Activated CD4-positive, alpha-beta T cell treated with anti-CD3 and anti-CD28 coated beads, Interleukin-2, amount 10 ng/mL, durations not matched to agents 7 days and 5 days (primary cell): ENCODE measurements at regions of chr3 and their contacts with region 1.

Region 1: DNA sequence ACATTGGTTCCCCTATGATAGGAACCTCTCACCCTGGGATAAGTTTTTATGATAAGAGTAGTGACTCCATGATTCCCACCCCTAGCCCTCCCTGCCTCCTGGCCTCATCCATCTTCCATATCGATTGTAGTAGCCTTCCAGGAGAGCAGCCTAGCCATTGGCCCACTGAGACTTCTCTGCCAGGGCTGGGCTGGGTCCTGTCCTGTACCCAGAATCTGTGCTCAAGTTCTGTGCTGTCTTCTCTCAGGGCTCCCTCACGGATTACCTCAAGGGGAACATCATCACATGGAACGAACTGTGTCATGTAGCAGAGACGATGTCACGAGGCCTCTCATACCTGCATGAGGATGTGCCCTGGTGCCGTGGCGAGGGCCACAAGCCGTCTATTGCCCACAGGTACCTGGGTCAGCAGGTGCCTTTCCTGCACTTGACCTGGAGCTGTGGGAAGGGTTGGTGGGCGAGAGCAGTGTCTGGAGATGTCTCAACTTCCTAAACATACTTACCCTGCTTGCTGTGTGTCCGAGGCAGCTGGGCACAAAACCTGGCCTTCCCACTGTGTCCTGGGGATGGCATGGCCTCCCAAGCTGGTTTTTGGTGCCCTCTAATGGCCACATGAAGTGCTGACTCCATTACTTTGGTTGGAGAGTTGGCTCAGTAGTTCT is 16.6 kb upstream of the EXOG start:
- DNase-seq: peak; percentile 63
- H3K4me3 Mint-ChIP-seq: no peak overlapping the region
- H3K27ac Mint-ChIP-seq: peak overlapping the region; percentile 68
- H3K4me1 Mint-ChIP-seq: no peaks in the 10 kb centered on the region
- H3K27me3 Mint-ChIP-seq: no peaks in the 10 kb centered on the region

Region 2: DNA sequence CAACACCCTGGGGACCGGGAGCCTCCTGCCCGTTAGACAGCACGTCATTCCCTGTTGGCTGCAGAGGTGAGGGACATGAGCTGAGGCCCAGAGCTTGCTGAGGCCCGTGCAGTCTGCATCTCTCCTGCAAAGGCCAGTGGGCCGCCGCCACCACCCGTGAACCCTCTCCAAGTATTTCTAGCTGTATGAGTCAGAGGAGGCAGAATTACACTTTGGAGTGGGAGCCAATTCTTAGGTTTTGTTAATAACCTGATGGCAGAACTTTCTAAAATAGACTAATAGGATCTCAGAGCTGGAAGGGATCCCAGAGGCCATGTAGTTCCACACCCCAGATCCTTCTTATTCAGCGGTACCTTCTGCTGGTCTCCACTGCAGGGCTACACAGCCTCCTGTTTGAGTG is 953.1 kb before region 1 on chr3:
- CTCF ChIA-PET with region 1: no interaction called
- POLR2A ChIA-PET with region 1: no interaction called
- DNase-seq: no peak
- H3K4me3 Mint-ChIP-seq: no peak overlapping the region
- H3K27ac Mint-ChIP-seq: no peak overlapping the region
- H3K4me1 Mint-ChIP-seq: no peaks in the 10 kb centered on the region
- H3K27me3 Mint-ChIP-seq: peaks cover 8% of the 10 kb centered on the region

Region 3: GRCh38 chr3:38460377-38461270 is 18.9 kb before region 1 on chr3:
- CTCF ChIA-PET with region 1: no interaction called
- POLR2A ChIA-PET with region 1: no interaction called
- DNase-seq: no peak
- H3K4me3 Mint-ChIP-seq: no peak overlapping the region
- H3K27ac Mint-ChIP-seq: peak overlapping the region; percentile 31
- H3K4me1 Mint-ChIP-seq: peaks cover 8% of the 10 kb centered on the region
- H3K27me3 Mint-ChIP-seq: peaks cover 3% of the 10 kb centered on the region

Region 4: DNA sequence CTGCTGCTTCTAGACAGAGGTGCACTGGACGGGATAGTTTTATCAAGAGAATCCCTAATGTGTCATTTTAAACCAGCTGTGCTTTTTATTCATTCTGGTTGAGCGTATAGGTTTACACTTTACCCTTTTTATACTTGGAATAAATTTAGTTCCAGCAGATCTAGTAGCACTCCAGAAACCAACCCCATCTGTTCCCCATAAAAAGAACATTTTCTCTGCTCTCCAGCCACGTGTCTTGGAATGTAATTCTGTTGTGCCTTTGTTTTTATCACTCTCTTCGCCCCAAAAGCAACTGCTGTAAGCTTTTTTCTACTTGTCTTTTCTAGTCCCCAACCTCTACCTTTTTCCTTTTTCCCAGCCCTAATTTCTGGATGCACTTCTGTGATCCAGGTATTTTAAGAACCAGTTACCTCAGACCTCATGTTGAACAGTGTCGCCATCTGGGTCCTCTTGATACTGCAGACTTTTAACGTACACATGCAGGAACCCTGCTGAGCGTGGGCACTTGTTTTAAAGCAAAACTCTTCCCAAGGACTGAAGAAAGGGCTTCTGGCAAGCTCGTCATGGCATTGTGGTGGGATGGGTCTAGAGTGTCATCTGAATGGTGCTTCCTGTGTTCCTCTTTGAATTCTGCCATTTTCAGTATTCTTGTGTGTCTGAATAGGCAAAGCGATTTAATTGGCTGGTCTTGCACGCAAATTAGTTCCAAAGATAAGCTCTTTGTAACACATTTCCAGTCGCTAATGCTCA is 10.9 kb after region 1 on chr3:
- CTCF ChIA-PET with region 1: interaction called, 13 read pairs
- POLR2A ChIA-PET with region 1: interaction called, 4 read pairs
- DNase-seq: no peak
- H3K4me3 Mint-ChIP-seq: no peak overlapping the region
- H3K27ac Mint-ChIP-seq: no peak overlapping the region
- H3K4me1 Mint-ChIP-seq: no peaks in the 10 kb centered on the region
- H3K27me3 Mint-ChIP-seq: no peaks in the 10 kb centered on the region